Activated CD8-positive, alpha-beta T cell treated with anti-CD3 and anti-CD28 coated beads, Interleukin-2, amount 10 ng/mL, durations not matched to agents 7 days and 5 days (primary cell): ENCODE measurements at regions of chr19 and their contacts with region 1.

Region 1: GRCh38 chr19:20776083-20777076 is at the start of gene ZNF66:
- DNase-seq: peak; percentile 97
- ATAC-seq: peak; percentile 98
- H3K4me3 Mint-ChIP-seq: peak within 1 kb of the TSS; percentile 99
- H3K27ac Mint-ChIP-seq: peak within 1 kb of the TSS; percentile 99
- H3K4me1 Mint-ChIP-seq: peaks cover 15% of the 10 kb centered on the region
- H3K27me3 Mint-ChIP-seq: no peaks in the 10 kb centered on the region
- total RNA-seq, gene ZNF66: 18.1 to 18.5 TPM

Region 2: GRCh38 chr19:20423381-20424197 is 352.8 kb before region 1 on chr19:
- CTCF ChIA-PET with region 1: no interaction called
- POLR2A ChIA-PET with region 1: interaction called, 14 read pairs
- DNase-seq: peak; percentile 54
- ATAC-seq: no peak
- H3K4me3 Mint-ChIP-seq: peak overlapping the region; percentile 96
- H3K27ac Mint-ChIP-seq: peak overlapping the region; percentile 98
- H3K4me1 Mint-ChIP-seq: peaks cover 15% of the 10 kb centered on the region
- H3K27me3 Mint-ChIP-seq: no peaks in the 10 kb centered on the region

Region 3: GRCh38 chr19:20661150-20661819 is 115.1 kb before region 1 on chr19 and contains the start of gene ZNF626:
- CTCF ChIA-PET with region 1: no interaction called
- POLR2A ChIA-PET with region 1: interaction called, 15 read pairs
- DNase-seq: peak; percentile 95
- ATAC-seq: peak; percentile 99
- H3K4me3 Mint-ChIP-seq: peak within 1 kb of the TSS; percentile 91
- H3K27ac Mint-ChIP-seq: peak within 1 kb of the TSS; percentile 93
- H3K4me1 Mint-ChIP-seq: peaks cover 18% of the 10 kb centered on the region
- H3K27me3 Mint-ChIP-seq: no peaks in the 10 kb centered on the region
- total RNA-seq, gene ZNF626: 7.0 to 9.1 TPM

Region 4: DNA sequence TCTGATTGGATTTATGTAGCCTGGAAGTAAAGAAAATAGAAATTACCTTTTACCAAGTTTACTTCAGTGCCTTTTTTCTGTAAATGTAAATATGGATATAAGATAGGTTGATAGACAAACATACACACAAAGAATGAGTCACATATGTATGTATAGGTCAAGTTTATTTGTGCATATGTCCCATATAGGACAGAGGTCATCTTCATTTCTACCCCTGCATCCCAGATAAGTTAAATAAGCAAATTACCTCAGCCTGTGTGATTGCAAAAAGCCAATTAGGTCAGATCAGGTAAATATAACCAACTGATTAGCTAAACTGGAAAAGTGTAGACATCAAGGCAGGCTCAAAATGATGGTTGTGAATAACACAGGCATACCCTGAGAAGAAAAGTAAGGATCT is 49.6 kb before region 1 on chr19:
- CTCF ChIA-PET with region 1: no interaction called
- POLR2A ChIA-PET with region 1: no interaction called
- DNase-seq: no peak
- ATAC-seq: no peak
- H3K4me3 Mint-ChIP-seq: no peak overlapping the region
- H3K27ac Mint-ChIP-seq: no peak overlapping the region
- H3K4me1 Mint-ChIP-seq: no peaks in the 10 kb centered on the region
- H3K27me3 Mint-ChIP-seq: no peaks in the 10 kb centered on the region

Region 5: GRCh38 chr19:20863176-20863575 is 86.8 kb after region 1 on chr19:
- CTCF ChIA-PET with region 1: no interaction called
- POLR2A ChIA-PET with region 1: no interaction called
- DNase-seq: no peak
- ATAC-seq: no peak
- H3K4me3 Mint-ChIP-seq: no peak overlapping the region
- H3K27ac Mint-ChIP-seq: no peak overlapping the region
- H3K4me1 Mint-ChIP-seq: no peaks in the 10 kb centered on the region
- H3K27me3 Mint-ChIP-seq: no peaks in the 10 kb centered on the region

Region 6: DNA sequence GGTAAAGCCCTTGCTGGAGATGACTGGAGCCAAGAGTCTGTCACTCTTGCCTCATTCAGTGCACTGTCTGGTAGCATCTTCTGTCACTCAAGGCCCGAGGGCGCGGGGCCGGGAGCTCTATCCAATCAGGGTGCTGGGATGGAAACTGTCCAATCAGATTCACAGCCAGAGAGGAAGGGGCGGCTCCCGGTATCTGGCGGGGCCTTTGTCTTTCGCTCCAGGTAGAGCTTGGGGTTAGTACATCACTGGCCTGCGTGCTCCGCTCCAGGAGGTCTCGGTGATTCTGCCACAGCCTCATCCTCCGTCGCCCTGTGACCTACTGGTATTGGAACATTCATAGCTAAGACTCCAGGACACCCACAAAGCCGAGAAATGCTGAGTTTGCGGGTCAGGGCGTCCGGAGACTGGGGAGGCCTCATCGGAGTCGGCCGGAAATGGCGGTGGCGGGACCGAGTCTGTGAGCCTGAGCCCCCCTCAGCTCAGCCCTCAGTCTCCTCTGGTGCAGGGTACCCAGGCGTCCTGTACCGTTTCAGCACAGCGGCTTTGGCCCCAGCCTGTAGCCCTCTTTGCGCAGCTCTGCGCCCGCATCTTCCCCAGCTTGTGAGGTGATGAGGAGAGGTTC is 223.5 kb after region 1 on chr19:
- CTCF ChIA-PET with region 1: no interaction called
- POLR2A ChIA-PET with region 1: interaction called, 23 read pairs
- DNase-seq: peak; percentile 94
- ATAC-seq: peak; percentile 100
- H3K4me3 Mint-ChIP-seq: peak overlapping the region; percentile 95
- H3K27ac Mint-ChIP-seq: peak overlapping the region; percentile 96
- H3K4me1 Mint-ChIP-seq: peaks cover 27% of the 10 kb centered on the region
- H3K27me3 Mint-ChIP-seq: no peaks in the 10 kb centered on the region

Region 7: DNA sequence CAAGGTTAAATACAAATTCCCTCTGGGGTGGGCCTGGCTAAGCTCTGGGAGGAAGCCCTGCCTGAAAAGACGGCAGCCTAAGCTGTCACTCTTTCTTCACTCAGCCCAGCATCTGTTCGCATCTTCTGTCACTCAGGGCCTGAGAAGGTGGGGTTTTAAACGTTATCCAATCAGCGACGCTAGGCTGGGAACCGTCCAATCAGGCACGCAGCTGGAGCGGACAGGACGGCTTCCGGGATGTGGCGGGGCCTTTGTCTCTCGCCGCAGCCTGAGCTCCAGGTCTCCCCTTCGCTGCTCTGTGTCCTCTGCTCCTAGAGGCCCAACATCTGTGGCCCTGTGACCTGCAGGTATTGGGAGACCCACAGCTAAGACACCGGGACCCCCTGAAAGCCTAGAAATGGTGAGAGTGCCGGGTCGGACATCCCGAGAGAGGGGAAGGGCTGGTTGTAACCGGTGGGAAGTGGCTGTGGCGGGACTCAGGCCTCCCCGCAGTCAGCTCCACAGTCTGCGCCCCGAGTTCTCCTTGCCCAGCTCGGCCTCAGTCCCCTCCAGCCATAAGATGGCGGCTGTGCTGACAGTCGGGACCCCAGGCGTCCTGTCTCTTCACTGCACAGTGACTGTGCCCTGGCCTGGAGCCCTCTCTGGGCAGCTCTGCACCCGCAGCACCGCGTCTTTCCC is 365.5 kb after region 1 on chr19 and contains the start of gene ZNF431:
- CTCF ChIA-PET with region 1: no interaction called
- POLR2A ChIA-PET with region 1: interaction called, 12 read pairs
- DNase-seq: peak; percentile 95
- ATAC-seq: peak; percentile 99
- H3K4me3 Mint-ChIP-seq: peak within 1 kb of the TSS; percentile 98
- H3K27ac Mint-ChIP-seq: peak within 1 kb of the TSS; percentile 97
- H3K4me1 Mint-ChIP-seq: peaks cover 24% of the 10 kb centered on the region
- H3K27me3 Mint-ChIP-seq: no peaks in the 10 kb centered on the region
- total RNA-seq, gene ZNF431: 22.6 to 23.9 TPM